B cell (primary cell): ENCODE measurements at regions of chr4 and their contacts with region 1.

Region 1: DNA sequence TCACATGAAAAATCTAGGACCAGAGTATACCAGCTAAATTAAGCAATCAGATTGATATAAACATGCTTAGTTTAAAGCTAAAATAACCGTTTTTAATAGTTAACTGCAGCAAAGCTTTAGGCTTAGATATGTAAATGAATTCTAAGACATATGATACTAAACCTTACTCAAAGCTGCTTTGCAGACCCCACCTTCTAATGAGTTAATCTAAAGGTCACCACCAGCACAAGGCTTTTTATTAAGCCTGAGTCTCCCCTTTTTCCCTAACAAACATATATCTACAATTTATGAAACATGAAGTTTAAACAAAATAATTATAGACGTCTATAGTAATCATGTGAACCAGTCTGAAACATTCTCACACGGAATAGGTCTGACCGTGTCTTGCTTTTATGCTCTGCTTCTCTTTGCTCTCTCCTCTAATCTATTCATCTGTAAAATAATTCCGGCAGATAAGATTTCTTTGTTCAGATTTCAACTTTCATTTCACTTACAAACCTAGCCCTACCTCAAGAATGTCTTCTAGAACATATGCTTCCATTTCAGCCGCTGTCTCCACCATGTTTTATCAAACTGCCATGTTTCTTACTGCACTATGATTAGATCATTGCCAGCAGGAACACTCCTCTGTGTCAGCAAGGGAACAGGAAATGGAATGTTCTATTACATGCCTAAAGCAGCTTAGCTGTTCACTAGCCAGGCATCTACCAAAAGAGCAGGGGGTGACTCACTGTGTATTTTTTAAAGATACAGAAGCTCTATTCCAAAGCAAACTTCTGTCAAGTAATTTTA is 35.9 kb downstream of the ANKRD17 start:
- DNase-seq: peak; percentile 76
- ATAC-seq: peak; percentile 97
- H3K4me3 ChIP-seq: peak overlapping the region; percentile 41 to 68 (median 58)
- H3K4me3 Mint-ChIP-seq: no peak overlapping the region
- H3K27ac ChIP-seq: peak overlapping the region; percentile 74 to 89
- H3K27ac Mint-ChIP-seq: no peak overlapping the region
- H3K4me1 ChIP-seq: peaks cover 27 to 32% of the 10 kb centered on the region in 2 donors
- H3K4me1 Mint-ChIP-seq: peaks cover 32% of the 10 kb centered on the region
- H3K27me3 ChIP-seq: no peaks in the 10 kb centered on the region
- H3K27me3 Mint-ChIP-seq: no peaks in the 10 kb centered on the region
- CTCF ChIP-seq: no peak

Region 2: DNA sequence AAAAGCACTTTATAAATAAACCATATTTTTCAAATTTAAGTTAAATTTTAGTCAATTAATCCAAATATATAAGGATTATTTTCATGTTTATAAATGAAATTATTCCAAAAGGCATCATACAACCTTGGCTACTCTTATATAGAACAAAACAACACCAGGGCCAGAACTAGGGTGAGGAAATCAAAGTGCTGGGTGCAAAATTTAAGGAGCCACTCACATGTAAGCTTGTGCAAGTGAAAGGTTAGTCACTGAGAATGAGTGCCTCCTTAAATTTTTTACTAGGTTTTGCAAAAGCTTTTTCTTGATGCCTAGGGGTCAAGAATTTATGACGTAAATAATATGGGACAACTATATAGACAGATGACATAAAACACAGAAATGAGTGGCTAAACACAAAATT is 69.8 kb before region 1 on chr4:
- CTCF ChIA-PET with region 1: no interaction called
- POLR2A ChIA-PET with region 1: no interaction called
- intact Hi-C with region 1: no loop called
- DNase-seq: no peak
- ATAC-seq: no peak
- H3K4me3 ChIP-seq: no peak overlapping the region
- H3K4me3 Mint-ChIP-seq: no peak overlapping the region
- H3K27ac ChIP-seq: no peak overlapping the region
- H3K27ac Mint-ChIP-seq: no peak overlapping the region
- H3K4me1 ChIP-seq: no peaks in the 10 kb centered on the region
- H3K4me1 Mint-ChIP-seq: no peaks in the 10 kb centered on the region
- H3K27me3 ChIP-seq: no peaks in the 10 kb centered on the region
- H3K27me3 Mint-ChIP-seq: no peaks in the 10 kb centered on the region
- CTCF ChIP-seq: no peak

Region 3: DNA sequence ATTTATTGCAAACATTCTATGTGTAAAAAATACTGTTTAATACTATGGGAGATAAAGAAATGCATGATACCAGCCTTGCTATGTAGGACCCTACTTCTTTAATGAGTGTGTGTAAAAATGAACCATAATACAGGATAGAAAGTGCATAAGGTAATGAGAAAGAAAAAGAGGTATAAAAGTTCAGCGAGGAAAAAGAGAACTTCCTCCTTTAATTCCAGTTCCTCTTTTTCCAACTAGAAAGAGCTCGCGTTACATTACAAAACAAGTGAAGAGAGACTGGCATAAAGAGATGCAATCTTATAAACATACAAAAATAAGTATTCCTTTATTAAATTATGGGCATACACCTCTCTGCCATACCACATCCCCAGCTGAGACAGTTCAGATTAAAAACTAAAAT is 41.4 kb before region 1 on chr4:
- CTCF ChIA-PET with region 1: no interaction called
- POLR2A ChIA-PET with region 1: interaction called, 4 read pairs
- intact Hi-C with region 1: loop called (anchors 5 kb)
- DNase-seq: peak; percentile 51
- ATAC-seq: peak; percentile 57
- H3K4me3 ChIP-seq: no peak overlapping the region
- H3K4me3 Mint-ChIP-seq: peak overlapping the region; percentile 21
- H3K27ac ChIP-seq: peak overlapping the region in 1 of 2 donors; percentile 39
- H3K27ac Mint-ChIP-seq: peak overlapping the region; percentile 6
- H3K4me1 ChIP-seq: peaks cover 9 to 15% of the 10 kb centered on the region in 2 donors
- H3K4me1 Mint-ChIP-seq: peaks cover 39% of the 10 kb centered on the region
- H3K27me3 ChIP-seq: no peaks in the 10 kb centered on the region
- H3K27me3 Mint-ChIP-seq: no peaks in the 10 kb centered on the region
- CTCF ChIP-seq: no peak

Region 4: DNA sequence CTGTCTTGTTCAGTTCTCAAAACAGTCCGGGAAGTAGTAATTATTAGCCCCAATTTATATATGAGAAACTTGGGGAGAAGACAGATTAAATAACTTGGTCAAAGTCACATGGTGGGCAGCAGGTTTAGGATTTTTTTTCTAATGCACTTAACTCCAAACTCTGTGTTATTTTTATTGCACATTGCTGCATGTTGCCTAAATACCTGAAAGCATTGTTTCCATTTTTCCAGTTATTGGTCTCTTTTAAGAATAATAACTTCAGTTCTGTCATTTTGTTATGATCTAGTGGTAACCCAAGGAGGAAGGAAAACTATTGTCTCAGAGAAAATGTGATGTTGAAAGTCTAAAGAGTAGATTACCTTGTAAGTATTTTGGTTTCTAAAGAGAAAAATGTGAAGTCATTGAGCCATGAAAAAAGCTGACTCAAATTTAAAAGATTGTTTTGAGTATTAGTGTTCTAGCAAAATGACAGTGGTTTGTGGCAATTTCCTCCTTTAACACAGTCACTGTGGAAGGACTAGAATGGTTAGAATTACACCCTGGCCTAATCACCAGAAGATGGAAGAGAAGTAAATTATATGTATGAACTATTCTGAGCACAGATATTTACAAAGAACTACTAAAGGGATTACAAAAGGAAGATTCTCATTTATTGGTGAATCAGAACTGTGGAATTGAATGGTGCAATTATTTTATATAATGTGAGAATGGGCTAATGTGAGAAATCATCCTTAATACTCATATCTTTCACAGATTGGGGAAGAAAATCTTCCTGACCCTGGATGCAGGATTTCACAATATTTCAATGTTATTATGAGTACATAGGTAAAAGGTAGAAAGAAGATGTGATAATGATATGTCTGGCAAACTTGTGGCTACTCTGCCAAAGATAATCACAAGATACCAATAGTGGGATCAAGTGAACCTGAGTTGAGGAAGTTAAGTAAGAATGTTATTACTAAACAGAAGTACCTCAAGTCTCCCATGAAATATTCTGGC is 496.0 kb after region 1 on chr4:
- CTCF ChIA-PET with region 1: no interaction called
- POLR2A ChIA-PET with region 1: no interaction called
- intact Hi-C with region 1: no loop called
- DNase-seq: no peak
- ATAC-seq: no peak
- H3K4me3 ChIP-seq: no peak overlapping the region
- H3K4me3 Mint-ChIP-seq: no peak overlapping the region
- H3K27ac ChIP-seq: no peak overlapping the region
- H3K27ac Mint-ChIP-seq: no peak overlapping the region
- H3K4me1 ChIP-seq: no peaks in the 10 kb centered on the region
- H3K4me1 Mint-ChIP-seq: no peaks in the 10 kb centered on the region
- H3K27me3 ChIP-seq: no peaks in the 10 kb centered on the region
- H3K27me3 Mint-ChIP-seq: peaks cover 11% of the 10 kb centered on the region
- CTCF ChIP-seq: no peak